Head of caudate nucleus (tissue), 42 donors: ENCODE measurements at regions of chr10 and their contacts with region 1.

Region 1: GRCh38 chr10:113788604-113789083 is 37.2 kb downstream of the PLEKHS1 start:
- DNase-seq: peak in 13 of 42 donors; percentile 1 to 58 (median 15)

Region 2: DNA sequence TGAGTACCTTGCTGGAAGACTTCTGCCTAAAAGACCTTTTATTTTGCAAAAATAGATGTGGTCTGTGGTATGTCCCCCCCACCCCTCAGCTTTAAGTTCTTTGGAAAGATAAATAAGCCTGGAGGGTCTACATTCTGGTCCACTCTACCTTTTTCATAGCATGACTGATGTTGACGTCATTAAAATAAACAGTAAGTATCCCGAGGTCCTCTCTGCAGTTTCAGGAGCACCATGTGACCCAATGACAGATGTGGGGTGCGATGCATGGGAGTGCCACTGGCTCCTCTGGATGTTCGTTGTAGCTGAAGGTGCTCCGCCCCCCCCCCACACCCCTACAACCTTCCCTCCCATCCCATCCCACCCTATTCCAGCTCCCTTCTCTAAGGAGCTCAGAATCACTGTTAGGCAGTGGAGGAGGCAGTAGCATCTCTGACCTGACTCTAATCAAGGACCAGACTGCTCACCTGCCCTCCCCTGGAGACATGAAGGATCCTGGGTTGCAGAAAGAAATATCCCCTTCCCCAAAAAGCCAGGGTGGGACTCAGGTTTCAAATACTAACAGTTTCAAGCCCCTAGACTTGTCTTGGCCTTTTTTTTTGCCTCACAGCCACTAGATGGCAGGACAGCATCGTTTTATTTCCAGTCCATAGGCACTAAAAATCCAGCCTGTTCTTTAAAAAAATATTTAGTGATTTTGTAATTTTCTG is 83.9 kb before region 1 on chr10:
- intact Hi-C with region 1: loop called (anchors 10 kb)
- DNase-seq: peak in 26 of 42 donors; percentile 15 to 76 (median 48)